ENCODE measurements at regions of chr19 and their contacts with region 1.

Region 1: DNA sequence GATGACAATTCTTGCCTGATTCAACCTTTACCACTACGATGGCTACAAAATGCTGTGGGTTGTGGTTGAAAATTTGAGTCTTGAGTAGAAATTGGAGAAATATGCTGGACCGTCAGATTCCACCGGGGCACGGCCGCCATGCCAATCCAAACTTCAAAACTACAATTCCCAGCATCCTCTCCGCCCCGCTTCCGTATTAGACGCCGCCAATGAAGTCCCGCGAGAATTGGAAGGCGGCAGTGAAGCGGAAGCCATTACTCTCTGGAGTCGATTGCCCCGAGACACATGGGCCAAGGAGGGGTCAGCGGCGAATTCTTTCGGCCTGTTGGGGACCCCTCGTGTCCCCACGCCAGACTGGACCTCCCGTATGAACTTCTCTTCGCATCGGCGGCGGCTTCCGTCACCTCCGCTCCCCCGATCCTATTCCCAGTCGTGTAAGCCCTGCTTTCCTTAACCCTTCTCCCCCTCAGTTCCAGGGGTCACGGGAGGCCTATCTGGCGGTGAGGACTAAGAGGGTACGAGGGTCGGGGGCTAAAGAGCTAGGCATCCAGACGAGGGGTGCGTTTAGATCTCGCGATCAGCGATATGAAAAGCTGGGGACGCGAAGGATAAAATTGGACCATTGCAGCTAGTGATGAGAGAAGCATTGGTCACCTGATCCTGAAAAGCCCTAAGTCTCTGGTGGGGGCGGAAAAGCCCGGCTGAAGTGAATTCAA is at the start of gene ZNF317:
- DNase-seq: peak; percentile 94
- ATAC-seq: peak; percentile 93
- H3K4me3 Mint-ChIP-seq: peak within 1 kb of the TSS; percentile 99
- H3K27ac Mint-ChIP-seq: peak within 1 kb of the TSS; percentile 96
- H3K4me1 Mint-ChIP-seq: peaks cover 38% of the 10 kb centered on the region
- H3K27me3 Mint-ChIP-seq: peaks cover 1% of the 10 kb centered on the region
- total RNA-seq, gene ZNF317: 39.0 to 39.8 TPM

Region 2: DNA sequence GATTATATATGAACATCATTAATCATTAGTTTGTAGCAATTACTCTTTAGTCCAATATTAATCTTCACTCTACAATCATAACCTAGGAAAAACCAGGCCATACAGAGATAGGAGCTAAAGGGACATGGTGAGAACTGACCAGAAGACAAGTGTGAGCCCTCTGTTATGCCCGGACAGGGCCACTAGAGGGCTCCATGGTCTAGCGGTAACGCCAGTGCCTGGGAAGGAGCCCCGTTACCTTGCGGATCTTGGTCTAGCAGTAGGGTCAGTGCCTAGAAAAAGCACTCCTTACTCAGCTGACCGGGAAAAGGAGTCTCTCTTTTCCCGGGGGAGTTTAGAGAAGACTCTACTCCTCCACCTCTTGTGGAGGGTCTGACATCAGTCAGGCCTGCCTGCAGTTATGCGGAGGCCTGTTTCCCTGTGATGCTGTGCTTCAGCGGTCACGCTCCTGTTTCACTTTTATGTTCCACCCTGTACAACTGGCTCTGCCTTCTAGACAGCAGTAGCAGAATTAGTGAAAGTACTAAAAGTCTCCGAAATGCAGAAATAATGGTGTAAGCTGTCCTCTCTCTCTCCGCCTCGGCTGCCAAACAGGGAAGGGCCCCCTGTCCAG is 65.3 kb after region 1 on chr19:
- CTCF ChIA-PET with region 1: no interaction called
- POLR2A ChIA-PET with region 1: no interaction called
- intact Hi-C with region 1: loop called (anchors 1 to 5 kb)
- DNase-seq: peak; percentile 79
- ATAC-seq: peak; percentile 75
- H3K4me3 Mint-ChIP-seq: no peak overlapping the region
- H3K27ac Mint-ChIP-seq: no peak overlapping the region
- H3K4me1 Mint-ChIP-seq: no peaks in the 10 kb centered on the region
- H3K27me3 Mint-ChIP-seq: peaks cover 9% of the 10 kb centered on the region

Region 3: GRCh38 chr19:9323919-9324583 is 183.7 kb after region 1 on chr19 and contains the start of gene ZNF559:
- CTCF ChIA-PET with region 1: no interaction called
- POLR2A ChIA-PET with region 1: no interaction called
- intact Hi-C with region 1: loop called in 1 of 2 experiments (anchors 1 kb)
- DNase-seq: peak; percentile 97
- ATAC-seq: peak; percentile 99
- H3K4me3 Mint-ChIP-seq: peak within 1 kb of the TSS; percentile 84
- H3K27ac Mint-ChIP-seq: peak within 1 kb of the TSS; percentile 96
- H3K4me1 Mint-ChIP-seq: peaks cover 23% of the 10 kb centered on the region
- H3K27me3 Mint-ChIP-seq: no peaks in the 10 kb centered on the region
- total RNA-seq, gene ZNF559: 11.7 to 13.0 TPM

Region 4: GRCh38 chr19:9538183-9539058 is 398.1 kb after region 1 on chr19 and contains the start of gene ZNF426:
- CTCF ChIA-PET with region 1: no interaction called
- POLR2A ChIA-PET with region 1: no interaction called
- intact Hi-C with region 1: loop called in 1 of 2 experiments (anchors 5 kb)
- DNase-seq: peak; percentile 95
- ATAC-seq: peak; percentile 97
- H3K4me3 Mint-ChIP-seq: peak within 1 kb of the TSS; percentile 97
- H3K27ac Mint-ChIP-seq: peak within 1 kb of the TSS; percentile 98
- H3K4me1 Mint-ChIP-seq: peaks cover 14% of the 10 kb centered on the region
- H3K27me3 Mint-ChIP-seq: no peaks in the 10 kb centered on the region
- total RNA-seq, gene ZNF426: 10.4 to 12.3 TPM

Region 5: GRCh38 chr19:9674663-9675357 is 534.5 kb after region 1 on chr19 and contains the start of gene ZNF562:
- CTCF ChIA-PET with region 1: no interaction called
- POLR2A ChIA-PET with region 1: no interaction called
- intact Hi-C with region 1: loop called in 1 of 2 experiments (anchors 5 kb)
- DNase-seq: peak; percentile 91
- ATAC-seq: peak; percentile 78
- H3K4me3 Mint-ChIP-seq: peak within 1 kb of the TSS; percentile 94
- H3K27ac Mint-ChIP-seq: peak within 1 kb of the TSS; percentile 97
- H3K4me1 Mint-ChIP-seq: peaks cover 30% of the 10 kb centered on the region
- H3K27me3 Mint-ChIP-seq: no peaks in the 10 kb centered on the region
- total RNA-seq, gene ZNF562: 29.9 to 39.7 TPM

Region 6: DNA sequence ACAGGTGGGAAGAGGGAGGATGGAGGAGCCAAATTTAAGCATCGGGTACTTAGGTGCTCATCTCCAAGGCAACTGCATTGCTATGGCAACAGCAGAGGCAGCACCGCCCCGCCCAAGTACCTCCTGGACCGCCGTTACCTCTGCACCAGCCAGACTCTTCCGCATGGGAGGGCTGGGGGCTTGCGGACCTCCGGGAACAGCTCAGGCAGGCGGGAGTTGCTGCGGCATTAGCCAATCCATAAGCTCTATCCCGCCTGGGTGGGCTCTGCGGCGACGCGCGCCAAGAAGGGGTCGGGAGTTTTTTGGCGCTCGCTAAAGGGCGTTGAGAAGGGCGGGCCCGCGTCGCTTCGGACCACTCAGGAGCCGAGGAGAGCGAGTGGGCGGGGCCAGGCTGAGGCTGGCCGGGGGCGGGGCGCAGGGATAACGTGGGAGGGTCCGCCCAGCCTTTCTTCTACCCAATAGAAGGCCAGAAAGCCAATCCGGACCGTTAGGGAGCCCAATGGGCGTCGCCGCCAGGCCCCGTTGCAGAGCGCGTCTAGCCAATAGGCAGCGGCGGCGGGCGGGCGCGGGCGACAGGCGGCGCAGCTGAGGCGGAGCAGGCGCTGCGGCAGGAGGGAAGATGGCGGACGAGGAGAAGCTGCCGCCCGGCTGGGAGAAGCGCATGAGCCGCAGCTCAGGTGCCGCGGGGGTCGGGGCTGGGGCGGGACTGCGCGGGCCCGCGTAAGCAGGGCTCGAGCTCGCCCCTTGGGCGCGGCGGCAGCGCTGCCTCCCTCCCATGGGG is 694.6 kb after region 1 on chr19 and contains the start of gene PIN1:
- CTCF ChIA-PET with region 1: no interaction called
- POLR2A ChIA-PET with region 1: no interaction called
- intact Hi-C with region 1: loop called in 1 of 2 experiments (anchors 1 kb)
- DNase-seq: peak; percentile 100
- ATAC-seq: peak; percentile 99
- H3K4me3 Mint-ChIP-seq: peak within 1 kb of the TSS; percentile 86
- H3K27ac Mint-ChIP-seq: peak within 1 kb of the TSS; percentile 88
- H3K4me1 Mint-ChIP-seq: peaks cover 20% of the 10 kb centered on the region
- H3K27me3 Mint-ChIP-seq: no peaks in the 10 kb centered on the region
- total RNA-seq, gene PIN1: 70.4 to 74.2 TPM